ENCODE measurements at regions of chr19 and their contacts with region 1.

Region 1: DNA sequence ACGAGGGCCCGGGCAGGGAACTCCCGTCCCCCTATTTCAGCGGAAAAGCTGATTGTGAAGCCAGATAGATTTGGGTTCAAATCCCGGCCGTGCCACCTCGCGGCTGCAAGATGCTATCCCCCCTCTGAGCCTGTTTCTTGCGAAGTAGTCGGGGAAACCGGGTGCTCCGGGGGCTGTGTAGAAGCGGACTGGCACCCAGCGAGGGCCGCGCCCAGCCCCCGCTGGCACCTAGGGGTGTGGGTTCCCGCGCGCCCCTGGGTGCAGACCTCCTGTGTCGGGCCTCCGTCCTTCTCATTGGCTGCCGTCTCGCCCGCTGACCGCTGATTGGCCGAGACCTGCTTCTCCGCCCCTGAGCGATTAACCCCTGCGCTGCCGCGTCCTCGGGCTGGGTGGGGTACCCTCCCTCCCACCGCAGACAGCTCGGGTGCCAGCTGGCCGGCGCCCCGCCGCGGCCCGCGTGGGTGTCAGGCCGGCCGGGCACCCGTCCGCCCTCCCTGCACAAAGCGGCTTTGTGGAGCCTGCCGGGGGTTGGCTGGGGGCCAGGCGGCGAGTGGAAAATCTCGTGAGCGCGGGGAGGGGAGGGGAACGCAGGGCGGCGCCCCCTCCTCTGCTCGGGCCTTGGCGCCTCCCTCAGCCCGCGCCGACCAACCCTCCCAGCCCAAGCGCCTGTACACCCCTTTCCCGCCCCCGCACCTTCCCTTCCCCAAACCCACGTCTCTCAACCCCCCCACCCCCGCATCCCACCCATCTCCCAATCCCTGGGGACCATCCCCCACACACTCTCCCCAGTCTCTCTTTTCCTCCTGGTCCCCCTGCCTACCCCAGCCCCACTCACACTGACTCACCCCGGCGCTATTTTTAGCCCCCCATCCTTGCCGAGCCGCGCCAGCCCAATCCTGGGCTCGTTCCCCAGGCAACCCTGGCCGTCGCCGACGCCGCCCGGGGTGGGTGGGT is 11.4 kb downstream of the CIC start:
- DNase-seq: peak; percentile 81 to 89 (median 85)
- H3K4me3 ChIP-seq: peak overlapping the region; percentile 70
- H3K4me3 Mint-ChIP-seq: peak overlapping the region; percentile 80 to 97 (median 90)
- H3K27ac ChIP-seq: peak overlapping the region; percentile 77
- H3K27ac Mint-ChIP-seq: peak overlapping the region; percentile 79 to 96 (median 87)
- H3K4me1 ChIP-seq: peaks cover 64% of the 10 kb centered on the region
- H3K4me1 Mint-ChIP-seq: peaks cover 36 to 46% (median 45%) of the 10 kb centered on the region in 3 donors
- H3K27me3 ChIP-seq: no peaks in the 10 kb centered on the region
- H3K27me3 Mint-ChIP-seq: peaks cover 0 to 5% of the 10 kb centered on the region in 2 donors

Region 2: DNA sequence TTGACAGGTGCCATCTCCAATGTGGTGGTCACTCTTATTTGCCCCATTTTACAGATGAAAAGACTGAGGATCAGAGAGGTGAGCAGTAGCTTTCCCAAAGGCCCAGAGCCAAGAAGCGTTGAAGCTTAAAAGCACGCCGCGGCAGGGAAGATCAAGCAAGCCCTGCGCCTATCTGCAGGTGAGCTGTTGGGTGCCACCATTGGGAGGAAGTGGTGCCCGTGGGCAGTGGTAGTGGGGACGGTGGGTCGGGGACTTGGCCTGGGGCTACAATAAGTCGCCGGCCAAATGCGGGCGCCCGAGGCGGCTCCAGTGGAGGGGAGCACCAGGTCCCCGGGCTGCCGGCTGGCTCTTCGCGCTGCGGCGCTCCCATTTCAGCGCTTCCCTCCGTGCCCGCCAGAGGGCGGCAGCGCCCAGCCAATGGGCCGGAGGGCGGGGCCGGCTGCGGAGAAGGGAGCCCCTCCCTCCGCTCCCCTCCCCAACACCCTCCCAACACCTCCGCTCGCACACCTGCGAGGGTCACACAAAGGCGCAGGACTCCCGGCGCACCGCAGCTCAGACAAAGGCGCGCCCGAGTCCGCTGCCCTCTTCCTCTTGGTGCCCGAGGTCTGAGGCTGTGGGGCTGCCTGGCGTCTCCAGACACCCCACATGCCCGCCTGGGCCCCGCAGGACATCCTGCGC is 147.5 kb before region 1 on chr19:
- CTCF ChIA-PET with region 1: interaction called, 12 read pairs
- POLR2A ChIA-PET with region 1: interaction called, 4 read pairs
- DNase-seq: peak; percentile 79 to 86 (median 80)
- H3K4me3 ChIP-seq: peak overlapping the region; percentile 90
- H3K4me3 Mint-ChIP-seq: peak overlapping the region; percentile 77 to 95 (median 87)
- H3K27ac ChIP-seq: peak overlapping the region; percentile 56
- H3K27ac Mint-ChIP-seq: peak overlapping the region; percentile 72 to 97 (median 96)
- H3K4me1 ChIP-seq: peaks cover 43% of the 10 kb centered on the region
- H3K4me1 Mint-ChIP-seq: peaks cover 56 to 80% (median 63%) of the 10 kb centered on the region in 3 donors
- H3K27me3 ChIP-seq: no peaks in the 10 kb centered on the region
- H3K27me3 Mint-ChIP-seq: no peaks in the 10 kb centered on the region

Region 3: GRCh38 chr19:42154471-42155323 is 125.8 kb before region 1 on chr19:
- CTCF ChIA-PET with region 1: no interaction called
- POLR2A ChIA-PET with region 1: no interaction called
- DNase-seq: no peak
- H3K4me3 ChIP-seq: no peak overlapping the region
- H3K4me3 Mint-ChIP-seq: peak overlapping the region in 2 of 7 donors; percentile 2 to 34
- H3K27ac ChIP-seq: no peak overlapping the region
- H3K27ac Mint-ChIP-seq: peak overlapping the region in 7 of 8 donors; percentile 7 to 79 (median 43)
- H3K4me1 ChIP-seq: no peaks in the 10 kb centered on the region
- H3K4me1 Mint-ChIP-seq: peaks cover 19 to 20% (median 20%) of the 10 kb centered on the region in 3 donors
- H3K27me3 ChIP-seq: peaks cover 5% of the 10 kb centered on the region
- H3K27me3 Mint-ChIP-seq: peaks cover 0 to 5% of the 10 kb centered on the region in 2 donors

Region 4: DNA sequence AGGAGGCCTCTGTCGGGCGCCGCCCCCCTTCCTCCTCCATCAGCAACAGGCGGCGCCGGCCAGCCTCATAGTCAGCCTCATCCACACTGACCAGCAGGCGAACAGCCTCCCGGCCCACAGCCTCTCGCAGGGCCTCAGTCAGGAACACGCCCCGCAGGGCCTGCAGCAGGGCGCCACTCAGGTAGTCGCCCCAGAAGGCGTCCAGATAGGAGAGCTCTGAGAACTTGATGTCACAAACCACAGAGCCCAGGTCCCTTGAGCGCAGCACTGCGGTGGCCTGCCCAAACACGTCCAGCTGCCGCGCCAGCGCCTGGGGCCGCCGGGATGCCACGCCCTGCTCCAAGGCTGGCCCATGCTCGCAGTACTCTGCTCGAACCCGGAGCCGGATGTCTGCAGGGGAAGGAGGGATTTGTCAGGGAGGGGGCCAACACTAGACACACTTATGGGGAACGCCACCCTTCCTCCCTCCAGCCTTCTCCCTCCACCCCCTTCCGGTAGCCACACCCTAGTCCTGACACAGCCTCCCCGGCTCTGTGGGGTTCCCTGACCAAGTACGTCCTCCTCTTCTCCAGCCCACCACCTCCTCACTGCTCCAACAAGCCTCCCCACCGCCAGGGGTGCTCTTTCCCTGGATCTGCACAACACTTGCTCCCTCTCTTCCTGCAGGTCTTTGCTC is 80.9 kb before region 1 on chr19:
- CTCF ChIA-PET with region 1: interaction called, 13 read pairs
- POLR2A ChIA-PET with region 1: interaction called, 4 read pairs
- DNase-seq: peak in 4 of 5 donors; percentile 54 to 73 (median 56)
- H3K4me3 ChIP-seq: peak overlapping the region; percentile 61
- H3K4me3 Mint-ChIP-seq: peak overlapping the region; percentile 64 to 92 (median 86)
- H3K27ac ChIP-seq: peak overlapping the region; percentile 88
- H3K27ac Mint-ChIP-seq: peak overlapping the region; percentile 85 to 98 (median 97)
- H3K4me1 ChIP-seq: peaks cover 93% of the 10 kb centered on the region
- H3K4me1 Mint-ChIP-seq: peaks cover 78 to 85% (median 82%) of the 10 kb centered on the region in 3 donors
- H3K27me3 ChIP-seq: no peaks in the 10 kb centered on the region
- H3K27me3 Mint-ChIP-seq: peaks cover 0 to 1% of the 10 kb centered on the region in 2 donors

Region 5: GRCh38 chr19:42268704-42269477 is 11.6 kb before region 1 on chr19 and contains the start of gene CIC:
- CTCF ChIA-PET with region 1: interaction called, 33 read pairs
- POLR2A ChIA-PET with region 1: interaction called, 13 read pairs
- DNase-seq: peak; percentile 99 to 100 (median 99)
- H3K4me3 ChIP-seq: peak within 1 kb of the TSS; percentile 72
- H3K4me3 Mint-ChIP-seq: peak within 1 kb of the TSS in 3 of 7 donors; percentile 83 to 91 (median 89)
- H3K27ac ChIP-seq: peak within 1 kb of the TSS; percentile 98
- H3K27ac Mint-ChIP-seq: peak within 1 kb of the TSS in 6 of 8 donors; percentile 95 to 100 (median 98)
- H3K4me1 ChIP-seq: peaks cover 29% of the 10 kb centered on the region
- H3K4me1 Mint-ChIP-seq: peaks cover 21 to 32% (median 27%) of the 10 kb centered on the region in 3 donors
- H3K27me3 ChIP-seq: no peaks in the 10 kb centered on the region
- H3K27me3 Mint-ChIP-seq: peaks cover 0 to 4% of the 10 kb centered on the region in 2 donors
- total RNA-seq, gene CIC: 53.9 to 60.4 TPM

Measured in CD8-positive, alpha-beta memory T cell (primary cell).